HCT116 (cell line): ENCODE measurements at regions of chr4 and their contacts with region 1.

Region 1: DNA sequence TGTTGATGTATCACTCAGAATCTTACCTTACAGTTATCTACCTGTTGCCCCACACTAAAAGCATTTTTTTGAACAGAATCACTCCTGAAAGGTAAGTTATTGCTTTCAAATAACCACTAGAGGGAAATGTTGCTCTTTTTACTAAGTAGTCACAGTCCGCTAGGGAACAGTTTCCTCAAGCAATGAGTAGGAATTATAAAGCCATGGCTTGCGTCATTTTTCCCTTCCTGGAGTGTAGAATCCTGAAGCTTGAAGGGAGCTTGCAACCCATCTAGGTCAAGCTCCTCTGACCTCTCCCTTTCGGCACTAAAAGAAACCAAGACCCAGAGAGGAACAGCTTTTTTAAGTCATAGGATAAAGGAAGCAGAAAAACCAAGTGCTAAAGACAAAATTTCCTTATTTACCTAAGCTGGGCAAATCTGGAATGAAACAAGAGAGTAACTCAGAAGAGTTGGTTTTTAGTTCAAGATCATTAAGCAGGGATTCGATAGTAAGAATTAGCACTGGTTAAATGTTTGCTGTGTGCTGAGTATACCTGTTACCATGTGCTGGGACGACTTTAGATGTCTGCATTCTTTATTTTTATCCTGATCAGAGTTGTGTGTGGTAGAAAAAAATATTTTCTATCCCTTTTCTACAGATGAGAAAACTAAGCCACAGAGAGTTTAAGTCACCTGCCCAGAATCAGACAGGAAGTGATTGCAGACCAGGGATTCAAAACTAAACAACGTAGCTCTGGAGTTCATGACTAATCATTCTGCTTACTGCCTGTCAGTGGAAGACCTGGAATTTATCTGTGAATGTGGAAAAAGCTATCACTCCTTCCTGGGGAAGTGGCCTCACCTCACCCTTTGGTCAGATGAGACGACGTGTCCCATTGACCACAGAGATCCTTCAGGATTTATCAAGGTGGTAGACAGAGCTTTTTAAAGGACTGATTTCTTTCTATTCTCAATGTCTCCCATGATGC is 631.5 kb downstream of the RAB28 start:
- DNase-seq: peak; percentile 63
- ATAC-seq: peak; percentile 97
- H3K4me3 ChIP-seq: no peak overlapping the region
- H3K27ac ChIP-seq: no peak overlapping the region
- H3K4me1 ChIP-seq: peaks cover 0 to 4% of the 10 kb centered on the region in 2 experiments; a peak in 1 of 4 replicates
- H3K27me3 ChIP-seq: 0 out of 2 replicates have a peak, but pooled peaks cover 9% of the 10 kb centered on the region
- CTCF ChIP-seq: peak; percentile 54 to 68 (median 68); a peak in 5 of 6 replicates
- POLR2A ChIP-seq: no peak
- RAD21 ChIP-seq: peak; percentile 89

Region 2: GRCh38 chr4:12658146-12658545 is 194.5 kb before region 1 on chr4:
- CTCF ChIA-PET with region 1: no interaction called
- POLR2A ChIA-PET with region 1: no interaction called
- RAD21 ChIA-PET with region 1: no interaction called
- intact Hi-C with region 1: no loop called
- DNase-seq: no peak
- ATAC-seq: no peak
- H3K4me3 ChIP-seq: no peak overlapping the region
- H3K27ac ChIP-seq: no peak overlapping the region
- H3K4me1 ChIP-seq: no peaks in the 10 kb centered on the region
- H3K27me3 ChIP-seq: no peaks in the 10 kb centered on the region
- CTCF ChIP-seq: no peak
- POLR2A ChIP-seq: no peak
- RAD21 ChIP-seq: no peak

Region 3: GRCh38 chr4:12902735-12903134 is 50.1 kb after region 1 on chr4:
- CTCF ChIA-PET with region 1: no interaction called
- POLR2A ChIA-PET with region 1: no interaction called
- RAD21 ChIA-PET with region 1: no interaction called
- intact Hi-C with region 1: no loop called
- DNase-seq: no peak
- ATAC-seq: no peak
- H3K4me3 ChIP-seq: no peak overlapping the region
- H3K27ac ChIP-seq: no peak overlapping the region
- H3K4me1 ChIP-seq: no peaks in the 10 kb centered on the region
- H3K27me3 ChIP-seq: peaks cover 5% of the 10 kb centered on the region; the same call in 1 of the 2 replicates
- CTCF ChIP-seq: no peak
- POLR2A ChIP-seq: no peak
- RAD21 ChIP-seq: no peak

Region 4: GRCh38 chr4:13248621-13249298 is 396.1 kb after region 1 on chr4:
- CTCF ChIA-PET with region 1: interaction called, 4 read pairs
- POLR2A ChIA-PET with region 1: no interaction called
- RAD21 ChIA-PET with region 1: no interaction called
- intact Hi-C with region 1: loop called (anchors 5 kb)
- DNase-seq: peak; percentile 8
- ATAC-seq: no peak
- H3K4me3 ChIP-seq: no peak overlapping the region
- H3K27ac ChIP-seq: no peak overlapping the region
- H3K4me1 ChIP-seq: no peaks in the 10 kb centered on the region
- H3K27me3 ChIP-seq: no peaks in the 10 kb centered on the region
- CTCF ChIP-seq: peak in 2 of 3 experiments; percentile 55; a peak in 4 of 6 replicates
- POLR2A ChIP-seq: no peak
- RAD21 ChIP-seq: no peak

Region 5: DNA sequence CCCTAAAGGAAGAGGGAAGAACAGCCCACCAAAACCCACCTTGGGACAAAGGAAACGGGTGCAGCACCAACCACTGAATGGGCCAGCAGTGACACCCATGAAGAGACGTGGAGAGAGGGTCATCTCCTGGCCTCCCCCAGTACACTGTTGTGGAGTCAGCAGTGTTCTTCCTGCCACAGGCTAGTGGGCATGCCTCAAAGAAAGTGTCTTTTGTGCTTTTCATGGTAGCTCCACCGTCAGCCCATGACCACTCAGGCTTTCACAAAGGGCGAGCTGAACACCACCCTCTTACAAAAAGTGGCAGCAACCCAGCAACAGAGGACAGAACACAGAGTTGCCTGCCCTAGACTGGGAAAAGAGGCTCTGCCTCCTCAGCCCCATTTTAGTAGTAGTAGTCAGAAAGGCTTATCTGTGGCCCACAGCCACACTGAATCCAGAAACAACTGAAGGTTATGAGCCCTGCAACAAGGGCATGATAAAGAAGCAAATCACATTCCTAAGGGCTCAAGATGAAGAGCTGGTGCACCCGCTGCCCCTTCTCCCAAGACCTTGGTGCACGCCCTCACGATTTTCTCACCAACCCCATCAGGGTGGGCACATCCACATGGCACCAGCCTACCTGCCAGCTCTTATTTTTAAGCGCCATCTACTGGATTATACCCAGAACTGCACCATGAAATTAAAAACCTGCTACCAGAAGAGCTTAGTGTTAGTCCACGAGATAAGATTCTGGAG is 578.4 kb after region 1 on chr4:
- CTCF ChIA-PET with region 1: interaction called, 11 read pairs
- POLR2A ChIA-PET with region 1: no interaction called
- RAD21 ChIA-PET with region 1: interaction called in 1 of 2 experiments, 8 read pairs
- intact Hi-C with region 1: no loop called
- DNase-seq: no peak
- ATAC-seq: no peak; the same call in 1 of the 2 replicates
- H3K4me3 ChIP-seq: no peak overlapping the region
- H3K27ac ChIP-seq: no peak overlapping the region
- H3K4me1 ChIP-seq: no peaks in the 10 kb centered on the region
- H3K27me3 ChIP-seq: no peaks in the 10 kb centered on the region
- CTCF ChIP-seq: peak in 2 of 3 experiments; percentile 41 to 59; a peak in 4 of 6 replicates
- POLR2A ChIP-seq: no peak
- RAD21 ChIP-seq: peak; percentile 44; the same call in 1 of the 2 replicates